ENCODE measurements at regions of chr15 and their contacts with region 1.

Region 1: DNA sequence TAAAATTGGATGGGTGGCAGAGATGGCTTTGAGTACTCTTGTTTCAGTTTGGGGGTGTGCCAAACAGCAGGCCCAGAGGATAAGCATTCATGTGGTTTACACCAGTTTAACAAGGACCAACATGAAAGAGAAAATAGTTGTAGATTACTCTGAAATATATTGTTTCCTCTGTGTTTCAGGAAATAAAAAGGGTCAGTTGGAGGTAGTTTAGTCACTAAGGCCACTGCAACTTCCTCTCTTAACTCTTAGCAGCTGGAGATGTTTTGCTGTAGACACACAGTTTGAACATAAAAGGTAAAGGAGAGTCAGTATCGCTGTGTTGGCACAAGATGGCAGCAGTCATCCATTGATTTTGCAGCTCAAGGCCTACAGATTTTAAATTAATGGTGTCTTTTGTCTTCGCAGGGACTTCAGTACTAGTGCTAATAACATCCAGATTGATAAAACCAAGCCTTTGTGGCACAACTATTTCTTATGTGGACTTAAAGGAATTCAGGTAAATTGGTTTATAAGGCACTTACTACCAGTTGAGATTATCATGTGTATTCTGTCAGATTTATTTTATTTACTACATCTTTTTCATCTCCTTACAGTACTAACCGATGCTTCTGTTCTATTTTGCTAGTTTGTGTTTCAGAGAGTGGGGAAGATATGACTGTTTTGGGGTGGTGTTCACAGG is 65.5 kb downstream of the GALK2 start:
- DNase-seq: peak; percentile 30
- H3K27ac ChIP-seq: no peak overlapping the region
- CTCF ChIP-seq: peak; percentile 82

Region 2: DNA sequence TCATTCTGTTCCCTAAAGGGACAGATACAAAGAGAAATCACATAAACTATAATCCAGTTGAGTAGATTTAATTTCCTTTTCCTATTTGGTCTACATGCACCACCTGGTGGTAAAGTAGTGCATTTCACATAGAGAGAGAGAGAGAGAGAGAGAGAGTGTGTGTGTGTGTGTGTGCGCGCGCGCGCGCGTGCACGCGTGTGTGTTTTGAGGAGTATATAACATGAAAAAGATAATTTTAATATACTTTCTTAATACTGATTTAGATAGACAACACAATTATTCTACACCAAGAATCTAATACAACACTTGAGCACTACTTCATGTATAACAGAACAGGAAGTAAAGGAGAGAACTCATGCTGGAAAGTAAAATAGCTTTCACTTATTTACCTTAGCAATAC is 186.4 kb after region 1 on chr15:
- CTCF ChIA-PET with region 1: interaction called, 14 read pairs
- POLR2A ChIA-PET with region 1: no interaction called
- DNase-seq: peak; percentile 23
- H3K27ac ChIP-seq: no peak overlapping the region
- CTCF ChIP-seq: peak; percentile 94

Region 3: GRCh38 chr15:50003786-50004334 is 768.3 kb after region 1 on chr15:
- CTCF ChIA-PET with region 1: interaction called, 12 read pairs
- POLR2A ChIA-PET with region 1: no interaction called
- DNase-seq: peak; percentile 86
- H3K27ac ChIP-seq: no peak overlapping the region
- CTCF ChIP-seq: peak; percentile 71